ENCODE measurements at regions of chr2 and their contacts with region 1.

Region 1: GRCh38 chr2:73828818-73829570 is at the start of gene STAMBP:
- DNase-seq: peak; percentile 80
- ATAC-seq: peak; percentile 92
- H3K4me3 Mint-ChIP-seq: peak within 1 kb of the TSS; percentile 98
- H3K27ac Mint-ChIP-seq: peak within 1 kb of the TSS; percentile 96
- H3K4me1 Mint-ChIP-seq: peaks cover 41% of the 10 kb centered on the region
- H3K27me3 Mint-ChIP-seq: no peaks in the 10 kb centered on the region
- CTCF ChIP-seq: no peak
- total RNA-seq, gene STAMBP: 32.2 and 35.4 TPM in 2 replicates

Region 2: GRCh38 chr2:73779467-73780236 is 49.3 kb before region 1 on chr2 and contains the start of gene DUSP11:
- CTCF ChIA-PET with region 1: no interaction called
- POLR2A ChIA-PET with region 1: interaction called, 5 read pairs
- intact Hi-C with region 1: loop called (anchors 1 kb)
- DNase-seq: peak; percentile 95
- ATAC-seq: peak; percentile 99
- H3K4me3 Mint-ChIP-seq: peak within 1 kb of the TSS; percentile 98
- H3K27ac Mint-ChIP-seq: peak within 1 kb of the TSS; percentile 96
- H3K4me1 Mint-ChIP-seq: peaks cover 26% of the 10 kb centered on the region
- H3K27me3 Mint-ChIP-seq: peaks cover 3% of the 10 kb centered on the region
- CTCF ChIP-seq: peak; percentile 71
- total RNA-seq, gene DUSP11: 25.6 and 30.5 TPM in 2 replicates

Region 3: DNA sequence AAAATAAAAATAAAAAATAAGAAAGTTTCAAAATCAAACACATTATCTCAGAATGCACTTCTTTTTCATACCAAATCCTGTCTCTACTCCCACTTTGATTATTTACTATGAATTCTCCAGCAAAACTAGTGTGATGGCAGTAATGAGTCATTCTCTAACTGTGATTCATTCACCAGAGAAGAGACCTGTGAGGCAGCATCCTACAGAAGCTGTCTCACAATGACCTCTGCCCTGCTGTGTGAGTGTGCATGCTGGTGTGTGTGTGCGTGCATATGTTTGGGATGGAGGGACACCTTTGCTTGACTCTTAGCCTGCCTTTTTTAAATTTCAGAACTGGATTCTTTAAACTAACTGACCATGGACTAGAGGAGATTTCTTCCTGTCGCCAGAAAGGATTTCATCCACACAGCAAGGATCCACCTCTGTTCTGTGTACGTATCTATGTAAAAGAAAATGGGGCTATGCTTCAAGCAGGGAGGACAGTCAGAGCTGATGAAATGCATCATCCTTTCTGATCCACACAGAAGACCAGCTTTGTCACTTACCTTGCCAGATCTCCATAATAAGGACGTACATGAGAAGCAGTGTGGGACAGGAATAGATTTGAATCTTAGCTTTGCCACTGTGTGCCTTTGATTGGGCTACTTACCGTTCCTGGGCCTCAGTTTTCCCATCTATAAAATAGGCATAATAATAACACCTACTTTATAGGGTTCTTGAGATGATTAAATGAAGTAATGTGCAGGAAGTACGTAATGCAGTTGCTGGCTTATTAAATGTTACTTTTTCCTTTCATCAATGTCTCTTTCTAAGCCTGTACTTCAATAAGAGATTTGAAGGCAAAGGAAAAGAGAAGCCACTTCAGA is 31.0 kb after region 1 on chr2:
- CTCF ChIA-PET with region 1: no interaction called
- POLR2A ChIA-PET with region 1: no interaction called
- intact Hi-C with region 1: no loop called
- DNase-seq: no peak
- ATAC-seq: no peak
- H3K4me3 Mint-ChIP-seq: no peak overlapping the region
- H3K27ac Mint-ChIP-seq: no peak overlapping the region
- H3K4me1 Mint-ChIP-seq: peaks cover 13% of the 10 kb centered on the region
- H3K27me3 Mint-ChIP-seq: no peaks in the 10 kb centered on the region
- CTCF ChIP-seq: no peak

Region 4: GRCh38 chr2:74080346-74080745 is 251.4 kb after region 1 on chr2:
- CTCF ChIA-PET with region 1: interaction called, 13 read pairs
- POLR2A ChIA-PET with region 1: no interaction called
- intact Hi-C with region 1: loop called (anchors 1 kb)
- DNase-seq: no peak
- ATAC-seq: peak; percentile 28
- H3K4me3 Mint-ChIP-seq: no peak overlapping the region
- H3K27ac Mint-ChIP-seq: peak overlapping the region; percentile 67
- H3K4me1 Mint-ChIP-seq: peaks cover 22% of the 10 kb centered on the region
- H3K27me3 Mint-ChIP-seq: no peaks in the 10 kb centered on the region
- CTCF ChIP-seq: no peak

Region 5: GRCh38 chr2:74119912-74120825 is 291.2 kb after region 1 on chr2:
- CTCF ChIA-PET with region 1: interaction called, 5 read pairs
- POLR2A ChIA-PET with region 1: interaction called, 14 read pairs
- intact Hi-C with region 1: loop called (anchors 1 kb)
- DNase-seq: peak; percentile 86
- ATAC-seq: peak; percentile 95
- H3K4me3 Mint-ChIP-seq: peak overlapping the region; percentile 89
- H3K27ac Mint-ChIP-seq: peak overlapping the region; percentile 94
- H3K4me1 Mint-ChIP-seq: peaks cover 6% of the 10 kb centered on the region
- H3K27me3 Mint-ChIP-seq: peaks cover 4% of the 10 kb centered on the region
- CTCF ChIP-seq: no peak

Region 6: DNA sequence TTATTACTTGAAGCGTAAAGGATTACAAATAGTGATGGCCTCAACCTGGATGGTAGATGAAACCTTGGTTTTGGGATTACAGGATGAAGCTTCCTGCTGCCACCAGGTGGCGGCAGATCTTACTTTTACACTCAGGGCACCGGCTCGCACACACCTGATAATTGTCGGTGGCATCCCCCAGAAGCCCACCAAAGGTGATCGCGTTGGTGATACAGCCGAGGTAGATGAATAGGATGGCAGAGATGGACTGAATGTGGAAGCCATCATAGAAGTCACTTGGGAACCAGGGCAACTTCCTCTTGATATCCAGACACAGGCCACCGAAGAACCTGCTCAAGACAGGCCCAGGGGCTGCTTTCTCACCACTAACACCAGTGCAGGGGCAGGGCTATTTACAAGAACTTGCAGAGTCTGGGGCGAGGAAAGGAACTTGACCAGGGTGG is 421.2 kb after region 1 on chr2:
- CTCF ChIA-PET with region 1: interaction called, 12 read pairs
- POLR2A ChIA-PET with region 1: interaction called, 3 read pairs
- intact Hi-C with region 1: loop called (anchors 1 kb)
- DNase-seq: peak; percentile 43
- ATAC-seq: peak; percentile 64
- H3K4me3 Mint-ChIP-seq: no peak overlapping the region
- H3K27ac Mint-ChIP-seq: no peak overlapping the region
- H3K4me1 Mint-ChIP-seq: peaks cover 2% of the 10 kb centered on the region
- H3K27me3 Mint-ChIP-seq: no peaks in the 10 kb centered on the region
- CTCF ChIP-seq: no peak